ENCODE measurements at regions of chr2 and their contacts with region 1.

Region 1: GRCh38 chr2:196767101-196767500 is 32.4 kb downstream of the GTF3C3 start:
- DNase-seq: no peak
- ATAC-seq: no peak
- H3K4me3 ChIP-seq: no peak overlapping the region
- H3K27ac ChIP-seq: no peak overlapping the region
- H3K4me1 ChIP-seq: no peaks in the 10 kb centered on the region
- H3K27me3 ChIP-seq: no peaks in the 10 kb centered on the region
- CTCF ChIP-seq: no peak
- POLR2A ChIP-seq: no peak

Region 2: GRCh38 chr2:196309691-196310090 is 457.4 kb before region 1 on chr2:
- intact Hi-C with region 1: loop called in 2 of 10 experiments (anchors 5 to 10 kb)
- DNase-seq: no peak
- ATAC-seq: no peak
- H3K4me3 ChIP-seq: no peak overlapping the region
- H3K27ac ChIP-seq: peak overlapping the region in 1 of 12 donors; percentile 63
- H3K4me1 ChIP-seq: peaks cover 0 to 27% (median 3%) of the 10 kb centered on the region in 12 donors
- H3K27me3 ChIP-seq: no peaks in the 10 kb centered on the region
- CTCF ChIP-seq: no peak
- POLR2A ChIP-seq: no peak

Region 3: DNA sequence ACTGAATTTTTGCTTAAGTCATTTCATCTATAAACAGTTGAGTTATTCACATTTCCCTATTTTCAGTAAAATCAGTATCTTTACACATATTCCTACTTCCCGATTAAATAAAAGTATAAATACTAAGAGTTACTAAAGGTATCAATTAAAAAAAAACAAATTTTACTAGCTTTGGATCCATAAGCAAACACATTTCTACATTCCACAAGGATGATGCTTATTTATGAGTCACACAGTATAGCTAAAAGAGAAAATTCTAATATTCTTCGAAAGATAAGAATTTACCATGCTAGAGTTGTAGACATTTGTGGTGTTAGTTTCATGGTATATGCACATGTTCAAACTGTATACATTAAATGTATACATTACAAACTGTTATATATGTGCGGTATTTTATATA is 135.7 kb after region 1 on chr2:
- intact Hi-C with region 1: no loop called
- DNase-seq: no peak
- ATAC-seq: no peak
- H3K4me3 ChIP-seq: no peak overlapping the region
- H3K27ac ChIP-seq: no peak overlapping the region
- H3K4me1 ChIP-seq: no peaks in the 10 kb centered on the region
- H3K27me3 ChIP-seq: no peaks in the 10 kb centered on the region
- CTCF ChIP-seq: no peak
- POLR2A ChIP-seq: no peak